ENCODE measurements at regions of chr18 and their contacts with region 1.

Region 1: GRCh38 chr18:52288403-52289004 is 51.5 kb upstream of the DCC start:
- DNase-seq: peak; percentile 25
- H3K4me3 ChIP-seq: no peak overlapping the region
- H3K27ac ChIP-seq: no peak overlapping the region
- H3K4me1 ChIP-seq: peaks cover 4% of the 10 kb centered on the region
- H3K27me3 ChIP-seq: no peaks in the 10 kb centered on the region
- CTCF ChIP-seq: peak; percentile 96 to 97

Region 2: GRCh38 chr18:51110073-51110803 is 1178.3 kb before region 1 on chr18:
- CTCF ChIA-PET with region 1: no interaction called
- dilution Hi-C with region 1: no loop called
- in situ Hi-C with region 1: no loop called
- intact Hi-C with region 1: no loop called
- DNase-seq: peak; percentile 25
- H3K4me3 ChIP-seq: peak overlapping the region in 2 of 3 experiments; percentile 40 to 46
- H3K27ac ChIP-seq: no peak overlapping the region
- H3K4me1 ChIP-seq: peaks cover 8% of the 10 kb centered on the region
- H3K27me3 ChIP-seq: no peaks in the 10 kb centered on the region
- CTCF ChIP-seq: peak; percentile 70 to 97

Region 3: GRCh38 chr18:51621113-51621863 is 667.2 kb before region 1 on chr18:
- CTCF ChIA-PET with region 1: no interaction called
- dilution Hi-C with region 1: no loop called
- in situ Hi-C with region 1: no loop called
- intact Hi-C with region 1: loop called (anchors 2 kb)
- DNase-seq: peak; percentile 48
- H3K4me3 ChIP-seq: no peak overlapping the region
- H3K27ac ChIP-seq: no peak overlapping the region
- H3K4me1 ChIP-seq: peaks cover 21% of the 10 kb centered on the region
- H3K27me3 ChIP-seq: no peaks in the 10 kb centered on the region
- CTCF ChIP-seq: peak; percentile 95 to 97

Region 4: GRCh38 chr18:51687845-51688585 is 600.5 kb before region 1 on chr18:
- CTCF ChIA-PET with region 1: no interaction called
- dilution Hi-C with region 1: no loop called
- in situ Hi-C with region 1: no loop called
- intact Hi-C with region 1: loop called (anchors 5 kb)
- DNase-seq: no peak
- H3K4me3 ChIP-seq: no peak overlapping the region
- H3K27ac ChIP-seq: no peak overlapping the region
- H3K4me1 ChIP-seq: no peaks in the 10 kb centered on the region
- H3K27me3 ChIP-seq: no peaks in the 10 kb centered on the region
- CTCF ChIP-seq: peak in 1 of 2 donors; percentile 18

Region 5: GRCh38 chr18:52007109-52007508 is 281.4 kb before region 1 on chr18:
- CTCF ChIA-PET with region 1: no interaction called
- dilution Hi-C with region 1: no loop called
- in situ Hi-C with region 1: no loop called
- intact Hi-C with region 1: loop called (anchors 1 kb)
- DNase-seq: no peak
- H3K4me3 ChIP-seq: no peak overlapping the region
- H3K27ac ChIP-seq: no peak overlapping the region
- H3K4me1 ChIP-seq: no peaks in the 10 kb centered on the region
- H3K27me3 ChIP-seq: no peaks in the 10 kb centered on the region
- CTCF ChIP-seq: peak in 1 of 2 donors; percentile 0

Region 6: GRCh38 chr18:52237551-52237950 is 51.0 kb before region 1 on chr18:
- CTCF ChIA-PET with region 1: no interaction called
- dilution Hi-C with region 1: no loop called
- in situ Hi-C with region 1: no loop called
- intact Hi-C with region 1: loop called (anchors 2 kb)
- DNase-seq: peak; percentile 98
- H3K4me3 ChIP-seq: no peak overlapping the region
- H3K27ac ChIP-seq: peak overlapping the region; percentile 94
- H3K4me1 ChIP-seq: peaks cover 31% of the 10 kb centered on the region
- H3K27me3 ChIP-seq: no peaks in the 10 kb centered on the region
- CTCF ChIP-seq: no peak

Region 7: DNA sequence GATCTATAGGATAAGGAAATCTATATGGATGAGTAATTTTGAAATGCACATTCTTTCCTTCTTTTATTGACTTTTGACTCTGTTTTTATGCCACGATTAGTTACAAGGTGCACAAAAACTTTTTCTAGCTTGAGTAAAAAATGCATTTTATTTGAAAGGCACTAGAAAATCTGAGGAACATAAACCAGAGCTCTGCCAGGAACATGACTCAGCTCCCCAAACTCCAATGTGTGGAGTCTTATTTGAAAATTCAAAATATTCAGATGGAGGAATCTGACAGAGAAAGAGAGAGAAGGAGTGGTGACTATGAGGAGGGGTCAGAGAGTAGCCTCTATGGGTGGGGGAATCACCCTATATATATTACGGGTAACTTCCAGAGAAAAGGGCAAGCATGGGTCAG is 282.5 kb after region 1 on chr18:
- CTCF ChIA-PET with region 1: no interaction called
- dilution Hi-C with region 1: no loop called
- in situ Hi-C with region 1: no loop called
- intact Hi-C with region 1: no loop called
- DNase-seq: no peak
- H3K4me3 ChIP-seq: no peak overlapping the region
- H3K27ac ChIP-seq: no peak overlapping the region
- H3K4me1 ChIP-seq: no peaks in the 10 kb centered on the region
- H3K27me3 ChIP-seq: no peaks in the 10 kb centered on the region
- CTCF ChIP-seq: no peak

Region 8: GRCh38 chr18:52670896-52671295 is 382.4 kb after region 1 on chr18:
- CTCF ChIA-PET with region 1: no interaction called
- dilution Hi-C with region 1: no loop called
- in situ Hi-C with region 1: no loop called
- intact Hi-C with region 1: loop called (anchors 2 kb)
- DNase-seq: peak; percentile 1
- H3K4me3 ChIP-seq: no peak overlapping the region
- H3K27ac ChIP-seq: no peak overlapping the region
- H3K4me1 ChIP-seq: no peaks in the 10 kb centered on the region
- H3K27me3 ChIP-seq: no peaks in the 10 kb centered on the region
- CTCF ChIP-seq: peak; percentile 7 to 35